Mammary epithelial cell (primary cell): ENCODE measurements at regions of chr15 and their contacts with region 1.

Region 1: GRCh38 chr15:23516866-23517265 is 48.6 kb upstream of the MKRN3 start:
- DNase-seq: no peak
- H3K4me3 ChIP-seq: no peak overlapping the region
- H3K27ac ChIP-seq: no peak overlapping the region
- H3K4me1 ChIP-seq: no peaks in the 10 kb centered on the region
- H3K27me3 ChIP-seq: no peaks in the 10 kb centered on the region
- CTCF ChIP-seq: no peak

Region 2: GRCh38 chr15:23472678-23473077 is 44.2 kb before region 1 on chr15:
- CTCF ChIA-PET with region 1: no interaction called
- dilution Hi-C with region 1: loop called (anchors 5 kb)
- in situ Hi-C with region 1: no loop called
- intact Hi-C with region 1: no loop called
- DNase-seq: peak; percentile 1
- H3K4me3 ChIP-seq: no peak overlapping the region
- H3K27ac ChIP-seq: no peak overlapping the region
- H3K4me1 ChIP-seq: no peaks in the 10 kb centered on the region
- H3K27me3 ChIP-seq: no peaks in the 10 kb centered on the region
- CTCF ChIP-seq: no peak